CD8-positive, alpha-beta T cell (primary cell): ENCODE measurements at regions of chr7 and their contacts with region 1.

Region 1: GRCh38 chr7:100158229-100159098 is at the start of gene TRAPPC14:
- DNase-seq: peak; percentile 66 to 95 (median 90)
- ATAC-seq: peak; percentile 83
- H3K4me3 ChIP-seq: peak within 1 kb of the TSS; percentile 78 to 90
- H3K4me3 Mint-ChIP-seq: peak within 1 kb of the TSS; percentile 85
- H3K27ac ChIP-seq: peak within 1 kb of the TSS; percentile 57 to 73
- H3K27ac Mint-ChIP-seq: peak within 1 kb of the TSS; percentile 82
- H3K4me1 ChIP-seq: peaks cover 54% of the 10 kb centered on the region
- H3K4me1 Mint-ChIP-seq: peaks cover 54% of the 10 kb centered on the region
- H3K27me3 ChIP-seq: no peaks in the 10 kb centered on the region
- H3K27me3 Mint-ChIP-seq: no peaks in the 10 kb centered on the region
- CTCF ChIP-seq: no peak
- total RNA-seq, gene TRAPPC14: 40.6 to 47.1 TPM

Region 2: DNA sequence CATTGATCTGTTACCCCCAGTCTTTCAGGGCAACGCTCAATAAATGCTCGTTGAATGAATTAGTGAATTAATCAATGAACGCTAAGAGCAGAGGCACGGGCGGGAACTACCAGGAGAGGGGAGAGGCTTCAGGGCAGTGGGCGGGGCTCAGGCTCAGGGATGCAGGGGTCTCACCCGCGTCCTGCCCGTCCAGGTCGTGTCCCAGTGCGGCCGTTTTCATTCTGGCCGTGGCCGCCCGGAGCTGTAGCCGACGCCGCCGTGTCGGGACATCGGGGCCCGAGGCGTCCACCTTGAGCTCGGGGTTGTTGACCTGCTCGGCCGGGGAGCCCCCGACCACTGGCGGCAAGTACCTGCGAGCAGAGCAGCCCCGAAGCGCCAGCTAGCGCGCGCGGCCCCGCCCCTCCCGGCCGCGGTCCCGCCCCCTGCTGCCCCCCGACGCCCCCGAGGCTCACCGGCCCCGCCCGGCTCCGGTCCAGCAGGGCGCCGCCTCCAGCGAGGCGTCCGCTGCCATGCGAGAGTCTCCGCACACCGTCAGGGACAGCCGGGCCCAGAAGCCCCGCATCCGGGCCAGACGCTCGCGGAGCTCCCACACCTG is 12.7 kb after region 1 on chr7:
- CTCF ChIA-PET with region 1: interaction called, 5 read pairs
- POLR2A ChIA-PET with region 1: interaction called, 5 read pairs
- intact Hi-C with region 1: loop called (anchors 1 kb)
- DNase-seq: peak in 6 of 9 experiments; percentile 38 to 69 (median 59)
- ATAC-seq: peak; percentile 44
- H3K4me3 ChIP-seq: peak overlapping the region; percentile 42 to 54
- H3K4me3 Mint-ChIP-seq: peak overlapping the region; percentile 82
- H3K27ac ChIP-seq: no peak overlapping the region
- H3K27ac Mint-ChIP-seq: peak overlapping the region; percentile 88
- H3K4me1 ChIP-seq: peaks cover 56% of the 10 kb centered on the region
- H3K4me1 Mint-ChIP-seq: peaks cover 67% of the 10 kb centered on the region
- H3K27me3 ChIP-seq: peaks cover 0 to 23% of the 10 kb centered on the region in 2 experiments
- H3K27me3 Mint-ChIP-seq: peaks cover 3% of the 10 kb centered on the region
- CTCF ChIP-seq: no peak

Region 3: GRCh38 chr7:100177045-100178001 is 18.9 kb after region 1 on chr7 and contains the starts of genes GPC2 and STAG3:
- CTCF ChIA-PET with region 1: interaction called, 5 read pairs
- POLR2A ChIA-PET with region 1: interaction called, 7 read pairs
- intact Hi-C with region 1: loop called (anchors 1 to 2 kb)
- DNase-seq: peak; percentile 89 to 98 (median 97)
- ATAC-seq: peak; percentile 92
- H3K4me3 ChIP-seq: peak within 1 kb of the TSS; percentile 52 to 61
- H3K4me3 Mint-ChIP-seq: peak within 1 kb of the TSS; percentile 74
- H3K27ac ChIP-seq: peak within 1 kb of the TSS in 1 of 2 experiments; percentile 6
- H3K27ac Mint-ChIP-seq: peak within 1 kb of the TSS; percentile 80
- H3K4me1 ChIP-seq: peaks cover 33% of the 10 kb centered on the region
- H3K4me1 Mint-ChIP-seq: peaks cover 43% of the 10 kb centered on the region
- H3K27me3 ChIP-seq: peaks cover 0 to under 1% of the 10 kb centered on the region in 2 experiments
- H3K27me3 Mint-ChIP-seq: no peaks in the 10 kb centered on the region
- CTCF ChIP-seq: no peak
- total RNA-seq, gene GPC2: 10.5 to 13.3 TPM
- total RNA-seq, gene STAG3: 6.3 to 6.6 TPM

Region 4: GRCh38 chr7:100215895-100216294 is 57.4 kb after region 1 on chr7:
- CTCF ChIA-PET with region 1: interaction called, 10 read pairs
- POLR2A ChIA-PET with region 1: interaction called, 6 read pairs
- intact Hi-C with region 1: loop called in 1 of 2 experiments (anchors 2 kb)
- DNase-seq: no peak
- ATAC-seq: no peak
- H3K4me3 ChIP-seq: no peak overlapping the region
- H3K4me3 Mint-ChIP-seq: no peak overlapping the region
- H3K27ac ChIP-seq: no peak overlapping the region
- H3K27ac Mint-ChIP-seq: no peak overlapping the region
- H3K4me1 ChIP-seq: peaks cover 61% of the 10 kb centered on the region
- H3K4me1 Mint-ChIP-seq: peaks cover 58% of the 10 kb centered on the region
- H3K27me3 ChIP-seq: no peaks in the 10 kb centered on the region
- H3K27me3 Mint-ChIP-seq: no peaks in the 10 kb centered on the region
- CTCF ChIP-seq: no peak

Region 5: GRCh38 chr7:100221231-100221718 is 62.8 kb after region 1 on chr7:
- CTCF ChIA-PET with region 1: interaction called, 10 read pairs
- POLR2A ChIA-PET with region 1: no interaction called
- intact Hi-C with region 1: loop called in 1 of 2 experiments (anchors 2 kb)
- DNase-seq: peak; percentile 75 to 95 (median 86)
- ATAC-seq: peak; percentile 67
- H3K4me3 ChIP-seq: peak overlapping the region; percentile 84 to 88
- H3K4me3 Mint-ChIP-seq: peak overlapping the region; percentile 94
- H3K27ac ChIP-seq: peak overlapping the region; percentile 93 to 98
- H3K27ac Mint-ChIP-seq: peak overlapping the region; percentile 99
- H3K4me1 ChIP-seq: peaks cover 52% of the 10 kb centered on the region
- H3K4me1 Mint-ChIP-seq: peaks cover 62% of the 10 kb centered on the region
- H3K27me3 ChIP-seq: no peaks in the 10 kb centered on the region
- H3K27me3 Mint-ChIP-seq: no peaks in the 10 kb centered on the region
- CTCF ChIP-seq: no peak